Gastrocnemius medialis (tissue), 4 donors: ENCODE measurements at regions of chr13 and their contacts with region 1.

Region 1: GRCh38 chr13:43303033-43303729 is 279.8 kb downstream of the DNAJC15 start:
- DNase-seq: peak; percentile 56 to 73
- ATAC-seq: peak; percentile 90 to 92
- H3K4me3 ChIP-seq: no peak overlapping the region
- H3K27ac ChIP-seq: peak overlapping the region; percentile 21 to 57 (median 52)
- H3K4me1 ChIP-seq: peaks cover 2 to 16% of the 10 kb centered on the region in 2 donors
- H3K27me3 ChIP-seq: no peaks in the 10 kb centered on the region
- CTCF ChIP-seq: peak; percentile 56 to 73 (median 71)
- POLR2A ChIP-seq: no peak

Region 2: DNA sequence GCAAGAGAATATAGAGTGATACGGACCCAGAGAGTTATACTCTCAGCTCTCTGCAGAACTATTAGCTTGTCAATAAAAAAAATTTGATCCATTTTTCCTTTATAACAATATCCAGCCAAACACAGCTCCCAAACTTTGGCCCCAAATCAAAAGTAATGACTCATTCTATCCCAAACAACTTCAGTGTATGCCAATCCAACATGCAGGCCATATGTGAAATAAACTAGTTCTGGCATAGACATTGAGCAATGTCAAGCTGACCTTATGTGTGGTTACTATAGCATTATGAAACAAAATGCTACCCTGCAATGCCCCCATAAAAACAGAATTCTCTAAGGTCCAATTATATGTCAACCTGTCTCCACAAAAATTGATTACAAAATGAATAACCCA is 70.3 kb before region 1 on chr13:
- in situ Hi-C with region 1: no loop called
- intact Hi-C with region 1: no loop called
- DNase-seq: no peak
- ATAC-seq: no peak
- H3K4me3 ChIP-seq: no peak overlapping the region
- H3K27ac ChIP-seq: no peak overlapping the region
- H3K4me1 ChIP-seq: no peaks in the 10 kb centered on the region
- H3K27me3 ChIP-seq: no peaks in the 10 kb centered on the region
- CTCF ChIP-seq: no peak
- POLR2A ChIP-seq: no peak

Region 3: DNA sequence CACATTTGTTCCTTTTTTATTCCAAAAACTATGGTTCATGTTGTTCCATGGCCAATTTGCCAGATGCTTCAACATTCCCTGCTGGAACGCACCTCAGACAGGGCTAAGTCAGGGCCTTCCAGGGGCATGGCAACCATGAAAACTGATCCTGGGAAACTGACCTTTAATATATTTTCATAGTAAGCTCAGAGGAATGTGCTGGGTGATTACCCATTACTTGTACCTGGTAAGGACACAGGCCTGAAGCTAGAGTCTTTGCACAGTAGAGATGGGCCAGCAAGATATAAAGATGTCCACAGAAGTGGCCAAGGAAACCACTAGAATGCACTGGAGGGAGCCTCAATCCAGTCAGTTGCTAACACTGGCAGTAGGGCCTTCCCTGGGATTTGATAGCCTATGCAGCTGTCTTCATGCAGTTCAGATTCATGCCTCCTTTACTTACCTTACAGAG is 130.5 kb after region 1 on chr13:
- in situ Hi-C with region 1: no loop called
- intact Hi-C with region 1: loop called (anchors 10 kb)
- DNase-seq: peak; percentile 79 to 83
- ATAC-seq: peak; percentile 90
- H3K4me3 ChIP-seq: no peak overlapping the region
- H3K27ac ChIP-seq: peak overlapping the region; percentile 69 to 83 (median 79)
- H3K4me1 ChIP-seq: peaks cover 36% of the 10 kb centered on the region in 2 donors
- H3K27me3 ChIP-seq: no peaks in the 10 kb centered on the region
- CTCF ChIP-seq: peak in 1 of 5 experiments; percentile 6
- POLR2A ChIP-seq: no peak

Region 4: GRCh38 chr13:43516401-43516833 is 213.2 kb after region 1 on chr13:
- in situ Hi-C with region 1: no loop called
- intact Hi-C with region 1: loop called (anchors 5 kb)
- DNase-seq: peak; percentile 38 to 44
- ATAC-seq: peak; percentile 92 to 97
- H3K4me3 ChIP-seq: no peak overlapping the region
- H3K27ac ChIP-seq: peak overlapping the region; percentile 1 to 48 (median 32)
- H3K4me1 ChIP-seq: peaks cover 18 to 22% of the 10 kb centered on the region in 2 donors
- H3K27me3 ChIP-seq: no peaks in the 10 kb centered on the region
- CTCF ChIP-seq: no peak
- POLR2A ChIP-seq: no peak

Region 5: DNA sequence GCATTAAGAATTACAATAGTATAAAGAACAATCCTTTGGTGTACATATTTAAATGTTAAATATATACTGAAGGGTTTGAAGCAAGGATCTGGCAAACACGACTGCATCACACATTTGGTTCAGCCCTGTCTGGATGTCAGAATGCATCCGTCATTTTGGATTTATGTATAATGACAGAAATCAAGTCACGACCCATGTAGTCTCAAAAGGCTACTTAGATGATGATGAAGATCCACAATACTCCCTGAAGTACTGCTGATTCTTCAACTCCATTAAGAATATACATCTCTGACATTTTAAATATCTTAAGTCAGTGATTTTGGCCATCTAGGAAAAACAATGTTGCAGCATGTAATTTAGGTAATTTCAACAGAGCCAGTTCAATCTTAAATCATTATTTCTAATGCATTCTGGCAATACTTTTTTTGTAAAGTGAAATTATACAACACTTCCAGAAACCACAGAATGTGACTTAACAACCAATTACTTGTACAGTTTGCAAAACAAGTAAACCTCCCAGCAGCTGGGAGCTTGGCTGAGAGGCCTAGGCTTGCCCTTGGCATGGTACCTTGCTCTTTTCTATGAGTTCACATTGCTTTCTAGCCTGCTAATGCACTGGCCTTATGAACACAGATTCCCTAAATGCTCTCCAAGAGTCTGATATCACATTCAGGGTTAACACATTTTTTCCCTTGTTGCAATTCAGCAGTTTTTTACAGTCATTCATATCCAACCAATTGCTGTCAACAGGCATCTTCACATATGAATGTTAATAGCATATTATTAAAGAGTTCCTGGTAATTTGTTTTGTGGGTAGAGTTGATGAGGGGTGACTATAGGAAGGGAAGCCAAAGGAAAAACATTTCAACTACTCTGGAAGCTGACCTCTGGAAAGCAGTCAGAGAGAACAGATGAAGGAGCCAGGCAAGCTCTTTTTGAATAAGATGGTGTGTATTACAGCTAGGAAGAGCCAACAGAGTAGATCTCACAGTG is 308.4 kb after region 1 on chr13:
- in situ Hi-C with region 1: no loop called
- intact Hi-C with region 1: loop called (anchors 2 kb)
- DNase-seq: no peak
- ATAC-seq: peak in 1 of 2 donors; percentile 52
- H3K4me3 ChIP-seq: no peak overlapping the region
- H3K27ac ChIP-seq: peak overlapping the region in 1 of 4 donors; percentile 41
- H3K4me1 ChIP-seq: peaks cover 35 to 47% of the 10 kb centered on the region in 2 donors
- H3K27me3 ChIP-seq: no peaks in the 10 kb centered on the region
- CTCF ChIP-seq: no peak
- POLR2A ChIP-seq: no peak

Region 6: DNA sequence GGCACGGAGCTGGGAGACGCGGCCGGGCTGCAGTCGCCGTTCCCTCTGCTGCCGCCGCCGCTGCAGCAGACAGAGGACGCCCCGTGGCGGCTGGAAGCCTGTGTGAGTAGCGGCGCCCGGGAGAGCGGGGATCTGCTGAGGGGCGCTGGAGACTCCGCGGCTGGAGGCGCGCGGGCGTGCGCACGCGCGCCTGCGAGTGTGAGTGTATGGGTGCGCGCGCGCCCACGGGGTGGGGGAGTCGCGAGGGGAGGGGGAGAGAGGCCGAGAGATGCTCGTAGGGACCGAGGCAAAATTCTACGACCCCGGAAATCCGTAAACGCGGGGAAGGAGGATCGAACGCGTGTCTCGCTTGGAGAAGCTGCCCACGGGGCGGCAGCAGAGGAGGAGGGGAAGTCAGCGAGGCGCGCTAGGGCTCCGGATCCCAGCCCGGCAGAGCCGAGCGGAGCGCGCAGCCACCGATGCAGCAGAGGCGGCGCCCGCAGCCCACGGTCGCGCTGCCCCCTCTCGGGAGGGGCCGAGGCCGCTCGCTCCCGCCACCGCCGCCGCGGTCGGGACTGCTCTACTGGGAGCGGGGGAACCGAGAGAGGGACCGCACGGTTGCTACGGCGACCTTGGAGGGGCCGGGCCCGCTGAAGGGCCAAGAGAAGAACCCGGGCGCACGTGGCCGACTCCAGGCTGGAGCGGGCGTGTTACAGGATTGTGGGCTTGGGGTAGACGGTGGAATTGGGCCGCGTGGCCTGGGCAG is 483.8 kb after region 1 on chr13 and contains the start of gene ENOX1:
- in situ Hi-C with region 1: loop called in 1 of 4 experiments (anchors 25 kb)
- intact Hi-C with region 1: loop called (anchors 5 kb)
- DNase-seq: peak in 1 of 2 donors; percentile 39
- ATAC-seq: peak; percentile 60 to 62
- H3K4me3 ChIP-seq: peak within 1 kb of the TSS; percentile 60 to 90 (median 68)
- H3K27ac ChIP-seq: peak within 1 kb of the TSS; percentile 63 to 74 (median 70)
- H3K4me1 ChIP-seq: peaks cover 9 to 21% of the 10 kb centered on the region in 2 donors
- H3K27me3 ChIP-seq: peaks cover 0 to 4% (median 0%) of the 10 kb centered on the region in 3 donors
- CTCF ChIP-seq: peak in 1 of 5 experiments; percentile 32
- POLR2A ChIP-seq: peak in 1 of 2 donors; percentile 17
- total RNA-seq, gene ENOX1: 0.46 to 3.5 (median 1.8) TPM

Region 7: DNA sequence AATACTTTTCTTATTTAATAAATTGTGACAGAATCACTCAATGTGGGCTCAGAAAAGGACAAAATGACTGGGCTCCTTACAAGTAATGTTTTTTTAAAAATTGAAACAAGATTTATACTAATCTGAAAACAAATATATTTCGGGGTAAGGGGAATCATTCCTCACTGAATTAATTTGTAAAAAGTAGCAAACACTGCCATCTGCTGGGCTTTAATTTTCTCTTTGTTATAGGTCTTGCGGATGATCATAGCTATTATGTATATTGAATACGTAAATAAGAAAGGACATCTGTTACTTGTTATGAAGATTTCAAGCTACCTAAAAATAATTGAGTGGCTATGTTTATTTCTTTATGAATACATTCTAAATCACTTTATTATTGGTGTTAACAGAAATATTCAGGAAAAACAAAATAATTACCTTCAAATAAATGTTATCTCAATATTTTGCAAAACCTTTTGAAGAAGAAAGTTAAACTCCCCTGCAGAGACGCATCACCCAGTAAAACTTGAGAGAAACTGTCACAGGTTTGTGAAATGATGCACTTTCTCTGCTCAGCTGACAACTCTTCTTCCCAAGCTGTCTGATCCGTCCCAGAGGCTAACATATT is 501.4 kb after region 1 on chr13:
- in situ Hi-C with region 1: loop called in 3 of 4 experiments (anchors 10 to 25 kb)
- intact Hi-C with region 1: loop called (anchors 1 kb)
- DNase-seq: no peak
- ATAC-seq: peak; percentile 47 to 64
- H3K4me3 ChIP-seq: no peak overlapping the region
- H3K27ac ChIP-seq: no peak overlapping the region
- H3K4me1 ChIP-seq: no peaks in the 10 kb centered on the region
- H3K27me3 ChIP-seq: no peaks in the 10 kb centered on the region
- CTCF ChIP-seq: peak; percentile 49 to 81 (median 57)
- POLR2A ChIP-seq: no peak

Region 8: DNA sequence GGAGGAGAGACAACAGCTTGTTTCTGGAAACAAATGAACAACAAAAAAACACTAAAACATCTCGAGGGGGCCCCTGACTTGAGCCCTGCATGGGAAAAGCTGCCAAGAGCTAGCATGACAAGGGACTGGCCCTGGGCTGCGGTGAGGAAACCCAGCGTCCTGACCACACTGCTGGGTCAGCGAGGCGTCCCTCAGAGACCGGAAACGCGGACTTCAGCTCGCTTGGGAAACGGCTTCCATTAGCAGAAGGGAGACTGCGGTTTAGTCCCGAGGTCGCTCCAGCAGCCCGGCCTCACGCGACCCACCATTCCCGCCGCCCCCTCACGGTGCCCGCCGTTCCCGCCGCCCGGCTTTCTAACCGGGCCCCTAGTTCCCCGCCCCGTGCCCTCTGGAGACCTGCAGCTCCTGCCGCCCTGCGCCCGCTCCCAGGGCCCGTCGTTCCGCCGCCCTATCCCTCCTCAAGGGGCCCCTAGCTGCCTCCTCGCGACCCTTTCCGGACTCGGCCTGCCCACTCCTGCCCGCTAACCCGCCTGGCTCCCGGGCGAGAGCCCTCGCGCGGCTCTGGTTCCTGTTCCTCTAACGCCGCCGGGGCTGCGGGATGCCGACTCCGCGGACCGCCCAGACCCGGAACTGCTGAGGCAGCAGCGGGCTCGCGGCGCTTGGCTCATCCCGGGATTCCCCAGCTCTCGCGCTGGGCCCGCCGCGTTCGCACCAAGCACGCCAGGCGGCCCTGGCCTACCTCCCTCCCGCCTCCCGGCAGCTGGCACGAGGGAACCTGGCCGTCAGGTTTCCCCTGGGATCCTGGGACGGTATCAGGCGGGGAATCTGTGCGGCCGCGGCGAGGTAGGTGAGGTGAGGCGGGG is 575.9 kb after region 1 on chr13 and contains the start of gene CCDC122:
- in situ Hi-C with region 1: no loop called
- intact Hi-C with region 1: loop called (anchors 10 kb)
- DNase-seq: peak; percentile 48 to 72
- ATAC-seq: peak; percentile 83 to 85
- H3K4me3 ChIP-seq: peak within 1 kb of the TSS; percentile 87 to 97 (median 94)
- H3K27ac ChIP-seq: peak within 1 kb of the TSS; percentile 85 to 90 (median 88)
- H3K4me1 ChIP-seq: peaks cover 4 to 6% of the 10 kb centered on the region in 2 donors
- H3K27me3 ChIP-seq: no peaks in the 10 kb centered on the region
- CTCF ChIP-seq: no peak
- POLR2A ChIP-seq: peak; percentile 40 to 56
- total RNA-seq, gene CCDC122: 0.16 to 1.7 (median 1.1) TPM in 3 of 4 donors, not detected in the other